Dendritic cell treated with granulocyte-macrophage colony-stimulating factor and Interleukin-4, amounts not matched to agents 40 ng/mL and 50 ng/mL, for 4 days (primary cell): ENCODE measurements at regions of chrX and their contacts with region 1.

Region 1: GRCh38 chrX:118847676-118848075 is 24.1 kb downstream of the ZCCHC12 start:
- H3K4me3 Mint-ChIP-seq: no peak overlapping the region
- H3K27ac Mint-ChIP-seq: no peak overlapping the region
- H3K4me1 Mint-ChIP-seq: no peaks in the 10 kb centered on the region
- H3K27me3 Mint-ChIP-seq: peaks cover 4% of the 10 kb centered on the region

Region 2: DNA sequence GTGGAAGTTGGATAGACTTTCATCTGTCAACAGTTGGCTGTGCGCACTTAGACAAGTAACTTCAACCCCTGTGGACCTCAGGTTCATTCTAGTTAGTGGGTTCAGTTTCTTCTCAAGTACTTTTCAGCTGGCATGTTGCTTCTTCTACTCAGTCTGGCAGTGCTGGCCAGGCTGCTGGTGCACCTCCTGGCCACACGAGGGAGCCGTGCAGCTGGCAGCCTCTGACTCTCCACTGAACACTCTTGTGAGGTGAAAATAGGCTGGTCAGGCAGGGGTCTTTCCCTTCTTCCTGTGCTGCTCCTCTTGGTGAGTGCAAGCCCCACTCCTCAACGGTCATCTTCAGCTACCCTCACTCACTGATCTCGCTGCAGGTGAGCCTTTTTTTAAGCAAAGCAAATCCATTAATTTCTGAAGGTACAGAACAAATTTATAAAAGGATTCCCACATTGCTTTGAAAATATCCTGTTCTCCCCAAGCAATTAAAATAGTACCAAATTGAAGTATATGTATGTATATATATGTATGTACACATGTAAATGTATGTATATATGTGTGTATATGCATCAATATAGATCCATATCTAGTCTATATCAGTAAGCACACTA is 157.3 kb after region 1 on chrX:
- intact Hi-C with region 1: loop called (anchors 5 kb)
- H3K4me3 Mint-ChIP-seq: no peak overlapping the region
- H3K27ac Mint-ChIP-seq: no peak overlapping the region
- H3K4me1 Mint-ChIP-seq: no peaks in the 10 kb centered on the region
- H3K27me3 Mint-ChIP-seq: no peaks in the 10 kb centered on the region

Region 3: DNA sequence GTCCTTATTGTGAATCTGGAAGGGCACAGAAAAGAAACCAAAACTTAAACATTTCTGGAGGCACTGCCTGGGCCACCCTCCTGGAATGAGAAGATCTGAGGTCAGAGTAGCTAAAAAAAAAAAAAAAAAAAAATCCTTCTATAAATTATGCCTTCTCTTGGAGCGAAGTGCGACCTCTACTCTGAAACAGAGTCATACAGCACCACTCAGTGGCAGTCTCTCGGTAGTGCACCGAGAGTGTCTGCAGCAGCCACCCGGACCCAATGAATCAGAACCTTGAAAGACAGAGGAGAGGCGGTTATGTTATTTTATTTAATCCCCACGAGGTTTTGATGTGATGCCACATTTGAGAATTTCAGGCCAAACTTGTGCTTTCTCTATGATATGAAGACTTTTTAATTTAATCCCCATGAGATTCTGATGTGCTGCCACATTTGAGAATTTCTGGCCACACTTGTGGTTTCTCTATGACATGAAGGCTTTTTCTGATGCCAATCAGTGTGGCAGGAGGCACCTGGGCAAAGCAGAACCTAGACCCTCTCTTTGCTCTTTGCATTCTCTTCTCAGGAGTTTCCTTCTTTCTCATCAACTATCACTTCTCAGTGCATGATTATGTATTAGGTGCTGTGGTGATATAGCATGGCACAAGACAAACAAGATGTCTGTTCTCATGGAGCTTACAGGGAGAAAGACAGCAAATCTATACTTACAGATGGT is 219.5 kb after region 1 on chrX:
- intact Hi-C with region 1: loop called (anchors 1 kb)
- H3K4me3 Mint-ChIP-seq: no peak overlapping the region
- H3K27ac Mint-ChIP-seq: no peak overlapping the region
- H3K4me1 Mint-ChIP-seq: peaks cover 10% of the 10 kb centered on the region
- H3K27me3 Mint-ChIP-seq: peaks cover 3% of the 10 kb centered on the region

Region 4: DNA sequence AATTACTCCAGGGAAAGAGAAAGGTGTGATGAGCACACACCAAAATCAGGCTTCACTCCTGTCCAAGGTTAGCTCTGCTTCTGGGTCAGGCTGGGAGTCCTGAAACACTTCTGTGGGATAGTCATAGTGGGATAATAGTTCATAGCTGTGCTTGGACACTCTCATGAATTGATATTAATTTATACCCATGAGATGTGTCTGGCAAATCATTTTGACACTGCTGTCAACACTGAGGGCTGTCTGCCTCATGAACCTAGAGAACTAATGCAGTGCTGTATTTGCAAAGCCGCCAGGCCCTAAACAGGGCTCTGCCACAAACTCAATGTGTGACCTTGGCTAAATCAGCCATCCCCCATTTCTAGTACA is 364.0 kb after region 1 on chrX:
- intact Hi-C with region 1: loop called (anchors 5 kb)
- H3K4me3 Mint-ChIP-seq: no peak overlapping the region
- H3K27ac Mint-ChIP-seq: no peak overlapping the region
- H3K4me1 Mint-ChIP-seq: no peaks in the 10 kb centered on the region
- H3K27me3 Mint-ChIP-seq: peaks cover 12% of the 10 kb centered on the region